WTC11 (cell line): ENCODE measurements at regions of chr20 and their contacts with region 1.

Region 1: GRCh38 chr20:3670511-3670910 is 7.3 kb upstream of the GFRA4 start:
- DNase-seq: peak; percentile 38
- ATAC-seq: peak; percentile 29
- H3K4me3 Mint-ChIP-seq: no peak overlapping the region
- H3K27ac Mint-ChIP-seq: no peak overlapping the region
- H3K4me1 Mint-ChIP-seq: peaks cover 30% of the 10 kb centered on the region
- H3K27me3 Mint-ChIP-seq: peaks cover 38% of the 10 kb centered on the region
- CTCF ChIP-seq: no peak

Region 2: DNA sequence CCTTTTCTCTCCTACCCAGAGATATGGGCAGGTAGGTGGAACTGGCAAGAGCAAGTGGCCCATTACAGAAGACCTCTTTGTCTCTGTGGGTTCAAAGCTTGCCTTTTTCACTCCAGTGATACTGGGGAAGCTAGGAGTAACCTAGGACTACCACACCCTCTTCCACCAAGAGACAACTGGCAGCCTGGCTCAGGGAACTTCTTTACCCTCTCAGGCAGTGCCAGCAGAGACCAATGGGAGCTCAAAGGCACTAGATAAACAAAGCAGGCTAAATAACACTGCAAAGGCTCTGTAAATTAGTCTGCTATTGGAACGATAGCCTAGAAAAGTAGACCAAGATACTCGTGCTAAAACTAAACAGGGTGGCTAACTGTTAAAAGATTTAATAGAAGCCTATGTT is 167.6 kb before region 1 on chr20:
- CTCF ChIA-PET with region 1: no interaction called
- POLR2A ChIA-PET with region 1: no interaction called
- DNase-seq: no peak
- ATAC-seq: no peak
- H3K4me3 Mint-ChIP-seq: no peak overlapping the region
- H3K27ac Mint-ChIP-seq: no peak overlapping the region; the same call in 1 of the 2 replicates
- H3K4me1 Mint-ChIP-seq: no peaks in the 10 kb centered on the region
- H3K27me3 Mint-ChIP-seq: no peaks in the 10 kb centered on the region
- CTCF ChIP-seq: no peak

Region 3: DNA sequence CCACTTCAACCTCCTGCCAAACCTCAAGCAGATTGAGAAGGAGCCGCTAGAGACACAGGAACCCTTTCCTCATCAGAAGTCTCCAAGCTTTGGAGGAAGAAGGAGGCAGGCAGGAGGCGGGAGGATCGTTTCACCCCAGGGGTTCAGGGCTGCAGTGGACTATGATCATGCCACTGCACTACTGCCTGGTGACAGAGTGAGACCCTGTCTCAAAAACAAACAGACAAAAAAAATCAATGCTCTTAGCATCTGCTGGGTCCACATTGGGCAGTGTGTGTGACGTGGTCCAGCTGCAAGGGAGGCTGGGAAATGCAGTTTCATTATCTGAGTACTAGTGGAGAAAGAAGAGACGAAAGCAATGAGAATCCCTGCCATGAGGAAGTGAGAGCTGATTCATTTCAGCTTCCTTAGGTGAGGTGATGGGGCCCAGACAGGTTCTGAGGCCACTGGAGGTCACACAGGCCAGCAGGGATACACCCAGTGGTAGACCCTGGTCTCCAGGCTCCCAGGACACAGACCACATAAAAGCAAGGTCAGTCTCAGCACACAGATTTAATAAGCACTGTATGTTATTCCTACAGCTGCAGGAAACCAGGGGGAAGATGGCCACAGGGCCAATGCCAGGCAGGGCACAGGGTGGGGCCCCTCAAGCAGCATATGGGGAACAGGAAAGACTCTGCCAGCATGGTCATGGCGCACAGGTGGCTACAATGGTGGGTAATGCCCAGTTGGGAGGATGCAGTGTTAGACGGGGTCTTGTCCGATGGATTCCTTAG is 11.6 kb before region 1 on chr20:
- CTCF ChIA-PET with region 1: interaction called, 17 read pairs
- POLR2A ChIA-PET with region 1: no interaction called
- DNase-seq: no peak
- ATAC-seq: no peak
- H3K4me3 Mint-ChIP-seq: no peak overlapping the region
- H3K27ac Mint-ChIP-seq: no peak overlapping the region
- H3K4me1 Mint-ChIP-seq: peaks cover 8% of the 10 kb centered on the region; the same call in 1 of the 2 replicates
- H3K27me3 Mint-ChIP-seq: peaks cover 48% of the 10 kb centered on the region
- CTCF ChIP-seq: no peak

Region 4: GRCh38 chr20:3696200-3696599 is 25.7 kb after region 1 on chr20:
- CTCF ChIA-PET with region 1: interaction called, 26 read pairs
- POLR2A ChIA-PET with region 1: no interaction called
- DNase-seq: no peak
- ATAC-seq: no peak
- H3K4me3 Mint-ChIP-seq: no peak overlapping the region
- H3K27ac Mint-ChIP-seq: no peak overlapping the region
- H3K4me1 Mint-ChIP-seq: no peaks in the 10 kb centered on the region
- H3K27me3 Mint-ChIP-seq: no peaks in the 10 kb centered on the region
- CTCF ChIP-seq: peak; percentile 67; the same call in 1 of the 2 replicates